ENCODE measurements at regions of chr1 and their contacts with region 1.

Region 1: GRCh38 chr1:39666772-39667171 is 5.1 kb downstream of the NT5C1A start:
- DNase-seq: no peak
- H3K4me3 ChIP-seq: no peak overlapping the region
- H3K27ac ChIP-seq: no peak overlapping the region
- H3K4me1 ChIP-seq: peaks cover 0 to 11% (median 9%) of the 10 kb centered on the region in 4 donors
- H3K27me3 ChIP-seq: no peaks in the 10 kb centered on the region
- CTCF ChIP-seq: no peak

Region 2: DNA sequence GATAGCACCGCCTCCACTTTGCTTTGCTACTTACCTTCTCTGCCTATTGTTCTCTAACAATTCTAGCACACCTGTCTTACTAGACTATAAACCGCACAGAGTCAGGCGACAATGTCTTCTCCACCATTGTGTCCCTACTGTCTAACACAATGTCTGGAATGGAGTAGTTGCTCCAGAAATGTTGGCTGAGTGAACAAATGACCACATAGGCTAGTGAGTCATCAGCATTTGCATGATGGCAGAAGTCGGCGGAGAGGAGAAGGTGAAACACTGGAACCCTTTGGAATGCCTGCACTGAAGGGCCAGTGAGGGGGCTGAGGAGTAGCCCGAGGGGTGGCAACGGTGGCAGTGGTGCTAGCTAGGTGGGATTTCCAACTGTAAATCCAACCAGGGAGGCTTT is 76.2 kb before region 1 on chr1:
- intact Hi-C with region 1: loop called (anchors 5 kb)
- DNase-seq: no peak
- H3K4me3 ChIP-seq: no peak overlapping the region
- H3K27ac ChIP-seq: no peak overlapping the region
- H3K4me1 ChIP-seq: no peaks in the 10 kb centered on the region
- H3K27me3 ChIP-seq: no peaks in the 10 kb centered on the region
- CTCF ChIP-seq: no peak

Region 3: GRCh38 chr1:39711104-39711965 is 44.6 kb after region 1 on chr1:
- intact Hi-C with region 1: loop called (anchors 10 kb)
- DNase-seq: no peak
- H3K4me3 ChIP-seq: no peak overlapping the region
- H3K27ac ChIP-seq: no peak overlapping the region
- H3K4me1 ChIP-seq: no peaks in the 10 kb centered on the region
- H3K27me3 ChIP-seq: peaks cover 0 to 25% of the 10 kb centered on the region in 2 donors
- CTCF ChIP-seq: no peak

Measured in tibial artery (tissue), 4 donors.